Sciatic nerve (tissue), 2 donors: ENCODE measurements at regions of chr22 and their contacts with region 1.

Region 1: DNA sequence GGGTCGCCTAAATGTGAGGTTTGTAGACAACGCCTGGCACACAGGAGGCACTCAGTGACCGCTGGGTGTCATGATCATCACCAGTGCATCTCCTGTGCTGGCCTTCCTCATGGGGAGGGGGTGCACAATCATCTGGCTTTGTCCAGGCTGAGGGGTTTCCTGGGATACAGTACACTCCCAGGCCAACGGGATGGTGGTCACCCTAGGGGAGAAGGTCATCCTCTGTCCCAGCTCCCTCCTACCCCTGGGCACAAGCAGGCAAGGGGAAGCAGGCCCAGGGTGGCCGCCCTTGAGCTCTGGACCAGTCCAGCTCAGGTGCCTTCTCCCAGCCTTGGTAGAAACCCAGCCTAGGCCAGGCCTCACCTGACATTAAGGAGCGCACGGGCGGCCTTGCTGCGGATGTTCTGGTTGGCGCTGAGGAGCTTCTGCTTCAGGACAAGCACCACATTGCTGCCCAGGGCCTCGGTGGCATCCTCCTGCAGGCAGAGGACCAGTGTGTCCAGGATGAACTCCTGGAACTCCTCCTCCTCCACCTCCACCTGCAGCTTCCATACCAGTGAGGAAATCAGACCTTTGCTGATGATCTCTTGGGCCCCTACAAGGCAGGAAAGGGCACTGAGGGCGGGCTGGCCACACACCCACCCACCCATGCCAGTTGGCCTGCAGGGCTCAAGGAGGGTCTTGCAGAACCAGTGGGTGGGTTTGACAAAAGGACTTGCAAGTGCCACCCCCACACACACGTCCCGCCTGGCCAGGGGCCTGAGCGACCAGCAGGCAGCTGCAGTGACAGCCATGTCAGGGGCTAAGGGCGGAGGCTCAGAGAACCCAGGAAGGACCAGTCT is 6.6 kb upstream of the GNAZ start:
- DNase-seq: peak; percentile 40
- ATAC-seq: no peak

Region 2: GRCh38 chr22:23044570-23044969 is 19.2 kb before region 1 on chr22:
- intact Hi-C with region 1: loop called (anchors 2 kb)
- DNase-seq: no peak
- ATAC-seq: no peak

Region 3: GRCh38 chr22:23113067-23113846 is 49.5 kb after region 1 on chr22:
- intact Hi-C with region 1: no loop called
- DNase-seq: peak; percentile 70
- ATAC-seq: peak; percentile 34